PC-9 (cell line): ENCODE measurements at regions of chr1 and their contacts with region 1.

Region 1: DNA sequence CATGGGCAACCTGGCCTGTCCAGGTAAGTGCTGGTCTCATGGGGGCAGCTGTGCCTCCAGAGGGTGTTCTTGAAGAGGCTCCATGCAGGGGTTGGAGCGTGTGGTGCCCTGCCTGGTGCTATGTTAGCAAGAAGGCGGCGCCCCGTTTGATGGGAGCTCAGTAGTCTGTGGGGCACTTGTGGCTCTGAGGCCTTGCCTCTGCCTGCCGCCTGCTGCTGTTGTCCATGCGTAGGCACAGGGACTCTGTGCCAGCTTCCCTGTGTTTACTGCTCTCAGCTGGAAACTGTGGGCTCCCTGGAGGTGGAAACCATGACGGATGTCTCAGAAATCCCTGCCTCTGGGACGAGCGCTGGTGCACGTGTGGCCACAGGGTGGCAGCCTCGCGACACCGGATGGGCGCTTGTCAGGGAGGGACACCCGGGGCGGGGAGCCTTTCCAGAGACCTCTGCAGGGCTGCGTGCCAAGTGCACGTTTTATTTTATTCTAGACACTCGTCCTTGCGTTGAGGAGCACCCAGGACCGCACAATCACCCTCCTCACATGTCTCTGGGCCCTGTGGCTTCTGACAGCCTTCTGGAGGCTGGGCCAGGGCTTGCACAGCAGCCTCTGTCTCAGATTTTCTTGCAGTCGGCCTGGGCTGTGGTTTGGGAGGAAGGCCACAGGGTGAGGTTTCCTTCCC is 27.1 kb downstream of the SNAP47 start:
- DNase-seq: peak; percentile 70 to 94
- H3K4me3 ChIP-seq: no peak overlapping the region
- H3K27ac ChIP-seq: peak overlapping the region; percentile 87
- H3K4me1 ChIP-seq: peaks cover 57% of the 10 kb centered on the region
- H3K27me3 ChIP-seq: no peaks in the 10 kb centered on the region
- CTCF ChIP-seq: peak; percentile 87

Region 2: DNA sequence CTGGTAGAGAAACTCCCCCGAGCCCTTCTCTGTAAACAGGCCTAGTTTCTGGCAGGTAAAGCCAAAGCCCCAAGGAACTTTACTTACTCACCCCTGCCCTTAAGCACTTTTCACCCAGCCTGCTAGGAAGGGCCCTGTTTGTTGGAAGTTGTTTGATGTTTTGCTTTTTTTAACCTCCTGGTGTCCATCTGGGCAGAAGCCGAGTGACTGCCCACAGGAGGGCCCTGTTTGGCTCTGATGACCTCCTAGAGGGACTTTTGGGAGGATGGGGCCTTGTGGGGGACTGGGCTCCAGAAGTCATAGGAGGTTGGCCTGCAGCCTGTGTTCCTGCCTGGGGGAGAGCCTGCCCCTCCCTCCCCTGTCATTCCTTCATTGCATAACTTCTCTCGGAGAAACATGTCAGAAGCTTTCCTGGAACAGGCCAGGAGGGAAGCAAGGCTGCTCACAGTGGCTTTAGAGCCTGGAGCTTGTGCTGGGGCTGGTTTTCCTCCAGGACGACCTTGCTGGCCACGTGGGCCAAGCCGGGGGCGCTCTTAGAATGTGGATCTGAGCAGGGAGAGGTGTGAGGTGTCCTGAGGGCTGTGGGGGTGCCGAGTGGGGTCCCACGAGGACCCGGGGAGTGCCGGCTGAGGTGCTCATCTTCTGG is 788.4 kb before region 1 on chr1:
- CTCF ChIA-PET with region 1: no interaction called
- POLR2A ChIA-PET with region 1: no interaction called
- intact Hi-C with region 1: no loop called
- DNase-seq: peak in 1 of 2 experiments; percentile 41
- H3K4me3 ChIP-seq: no peak overlapping the region
- H3K27ac ChIP-seq: 0 out of 2 replicates have a peak overlapping the region, but pooled peaks have one; percentile 0
- H3K4me1 ChIP-seq: no peaks in the 10 kb centered on the region
- H3K27me3 ChIP-seq: no peaks in the 10 kb centered on the region
- CTCF ChIP-seq: no peak

Region 3: GRCh38 chr1:227778401-227778947 is 16.1 kb after region 1 on chr1:
- CTCF ChIA-PET with region 1: no interaction called
- POLR2A ChIA-PET with region 1: interaction called, 5 read pairs
- intact Hi-C with region 1: loop called (anchors 1 kb)
- DNase-seq: peak in 1 of 2 experiments; percentile 32
- H3K4me3 ChIP-seq: no peak overlapping the region
- H3K27ac ChIP-seq: no peak overlapping the region
- H3K4me1 ChIP-seq: no peaks in the 10 kb centered on the region
- H3K27me3 ChIP-seq: no peaks in the 10 kb centered on the region
- CTCF ChIP-seq: no peak

Region 4: GRCh38 chr1:227828786-227829185 is 66.4 kb after region 1 on chr1:
- CTCF ChIA-PET with region 1: no interaction called
- POLR2A ChIA-PET with region 1: no interaction called
- intact Hi-C with region 1: no loop called
- DNase-seq: no peak
- H3K4me3 ChIP-seq: no peak overlapping the region
- H3K27ac ChIP-seq: no peak overlapping the region
- H3K4me1 ChIP-seq: no peaks in the 10 kb centered on the region
- H3K27me3 ChIP-seq: no peaks in the 10 kb centered on the region; the same call in 1 of the 2 replicates
- CTCF ChIP-seq: no peak

Region 5: DNA sequence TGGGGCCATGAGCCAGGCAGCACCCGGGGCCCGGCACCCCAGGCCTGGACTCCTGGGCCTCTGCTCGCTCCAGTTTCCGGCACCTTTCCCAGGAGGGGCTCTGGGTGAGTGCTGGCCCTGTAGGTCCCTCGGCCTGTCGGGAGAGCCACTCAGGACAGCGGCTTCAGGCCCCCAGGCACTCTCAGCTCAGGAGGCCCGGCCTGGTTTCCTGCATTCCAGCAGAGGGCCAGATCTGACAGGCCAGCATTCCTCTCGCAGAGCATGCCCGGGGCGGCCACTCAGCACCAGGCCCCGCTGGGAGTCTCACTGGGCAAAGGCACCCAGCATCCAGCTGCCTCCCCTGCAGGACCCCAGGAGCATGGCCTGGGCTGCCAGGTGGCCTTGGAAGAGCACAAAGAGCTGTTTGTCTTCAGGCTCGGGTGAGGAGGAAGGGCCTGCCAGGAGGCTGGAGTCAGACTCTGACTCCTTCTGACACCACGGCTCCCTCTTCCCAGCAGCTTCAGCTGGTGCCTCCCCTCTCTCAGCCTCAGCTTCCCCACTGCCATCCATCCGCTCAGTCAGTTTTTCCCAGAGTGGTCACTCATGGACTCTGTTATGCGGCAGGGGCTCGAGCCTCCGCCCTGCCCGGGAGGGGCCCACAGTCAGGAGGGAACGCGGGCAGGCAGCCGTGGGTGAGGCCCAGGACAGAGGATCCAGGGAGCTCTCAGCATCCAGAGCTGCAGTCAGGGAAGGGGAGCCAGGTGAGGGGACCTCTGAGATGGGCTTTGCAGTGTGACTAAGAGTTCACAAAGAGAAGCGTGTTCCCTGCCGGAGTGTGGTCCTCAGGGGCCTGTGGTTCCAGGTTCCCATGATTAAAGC is 133.7 kb after region 1 on chr1:
- CTCF ChIA-PET with region 1: interaction called, 8 read pairs
- POLR2A ChIA-PET with region 1: interaction called, 7 read pairs
- intact Hi-C with region 1: loop called (anchors 1 kb)
- DNase-seq: peak in 1 of 2 experiments; percentile 91
- H3K4me3 ChIP-seq: no peak overlapping the region
- H3K27ac ChIP-seq: no peak overlapping the region
- H3K4me1 ChIP-seq: no peaks in the 10 kb centered on the region
- H3K27me3 ChIP-seq: no peaks in the 10 kb centered on the region
- CTCF ChIP-seq: no peak

Region 6: DNA sequence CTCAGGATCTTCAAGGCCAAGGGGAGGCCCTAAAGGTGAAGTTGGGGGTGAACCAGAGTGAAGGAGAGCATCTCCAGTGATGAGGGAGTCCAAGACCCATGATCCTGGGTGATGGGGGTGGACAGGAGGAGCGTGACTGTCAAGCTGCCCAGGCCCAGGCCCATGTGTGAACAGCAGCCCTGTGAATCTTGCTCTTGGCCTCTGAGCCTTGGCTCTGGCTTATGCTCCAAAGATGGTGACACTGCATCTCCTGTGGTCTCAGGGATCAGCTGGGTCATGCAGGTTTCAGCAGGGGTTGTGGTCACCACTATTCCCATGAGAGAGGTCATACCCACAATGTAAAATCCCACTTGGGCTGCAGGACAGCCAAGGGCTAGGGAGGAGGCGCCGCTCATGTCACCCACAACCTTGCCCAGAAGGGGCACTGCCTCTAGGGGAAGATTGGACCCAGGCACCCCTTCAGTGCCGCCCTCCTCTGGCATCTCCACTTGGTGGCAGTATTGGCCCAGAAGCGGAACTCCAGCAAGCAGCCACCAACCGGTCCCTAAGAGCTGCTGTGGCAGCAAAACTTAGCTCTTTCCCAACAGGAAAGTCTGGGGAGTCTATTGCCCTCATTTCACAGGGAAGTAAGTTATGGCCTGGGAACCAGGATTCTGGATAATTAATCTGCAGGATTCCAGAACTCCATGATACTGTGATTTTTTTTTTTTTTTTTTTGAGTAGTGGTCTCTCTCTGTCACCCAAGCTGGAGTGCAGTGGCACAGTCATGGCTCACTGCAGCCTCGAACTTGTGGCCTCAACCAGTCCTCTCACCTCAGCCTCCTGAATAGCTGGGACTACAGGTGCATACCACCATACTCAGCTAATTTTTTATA is 236.9 kb after region 1 on chr1:
- CTCF ChIA-PET with region 1: interaction called, 3 read pairs
- POLR2A ChIA-PET with region 1: no interaction called
- intact Hi-C with region 1: loop called (anchors 1 kb)
- DNase-seq: peak; percentile 80 to 91
- H3K4me3 ChIP-seq: no peak overlapping the region
- H3K27ac ChIP-seq: no peak overlapping the region
- H3K4me1 ChIP-seq: no peaks in the 10 kb centered on the region
- H3K27me3 ChIP-seq: no peaks in the 10 kb centered on the region
- CTCF ChIP-seq: peak; percentile 93

Region 7: DNA sequence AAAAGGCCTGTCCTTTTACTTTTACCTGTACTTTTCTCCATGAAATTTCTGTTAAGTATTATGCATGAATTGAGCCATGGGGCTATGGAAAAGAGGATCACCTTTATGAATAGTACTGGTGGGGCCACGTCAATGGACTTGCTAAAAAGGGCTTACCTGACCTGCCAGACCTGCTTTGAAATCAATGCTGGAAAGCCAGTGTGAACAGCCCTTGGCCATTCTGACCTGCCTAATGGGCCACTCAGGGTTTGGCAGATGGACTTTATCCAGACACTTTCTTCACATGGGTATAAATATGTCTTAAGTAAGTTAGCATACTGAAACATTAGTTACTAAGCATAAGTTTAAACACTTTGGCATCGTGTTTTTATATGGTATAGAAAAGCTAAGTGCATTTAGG is 369.4 kb after region 1 on chr1:
- CTCF ChIA-PET with region 1: no interaction called
- POLR2A ChIA-PET with region 1: no interaction called
- intact Hi-C with region 1: loop called (anchors 1 kb)
- DNase-seq: peak; percentile 27 to 63
- H3K4me3 ChIP-seq: peak overlapping the region; percentile 62; the same call in 1 of the 2 replicates
- H3K27ac ChIP-seq: peak overlapping the region; percentile 82
- H3K4me1 ChIP-seq: peaks cover 16% of the 10 kb centered on the region
- H3K27me3 ChIP-seq: no peaks in the 10 kb centered on the region
- CTCF ChIP-seq: no peak